ENCODE measurements at regions of chr20 and their contacts with region 1.

Region 1: DNA sequence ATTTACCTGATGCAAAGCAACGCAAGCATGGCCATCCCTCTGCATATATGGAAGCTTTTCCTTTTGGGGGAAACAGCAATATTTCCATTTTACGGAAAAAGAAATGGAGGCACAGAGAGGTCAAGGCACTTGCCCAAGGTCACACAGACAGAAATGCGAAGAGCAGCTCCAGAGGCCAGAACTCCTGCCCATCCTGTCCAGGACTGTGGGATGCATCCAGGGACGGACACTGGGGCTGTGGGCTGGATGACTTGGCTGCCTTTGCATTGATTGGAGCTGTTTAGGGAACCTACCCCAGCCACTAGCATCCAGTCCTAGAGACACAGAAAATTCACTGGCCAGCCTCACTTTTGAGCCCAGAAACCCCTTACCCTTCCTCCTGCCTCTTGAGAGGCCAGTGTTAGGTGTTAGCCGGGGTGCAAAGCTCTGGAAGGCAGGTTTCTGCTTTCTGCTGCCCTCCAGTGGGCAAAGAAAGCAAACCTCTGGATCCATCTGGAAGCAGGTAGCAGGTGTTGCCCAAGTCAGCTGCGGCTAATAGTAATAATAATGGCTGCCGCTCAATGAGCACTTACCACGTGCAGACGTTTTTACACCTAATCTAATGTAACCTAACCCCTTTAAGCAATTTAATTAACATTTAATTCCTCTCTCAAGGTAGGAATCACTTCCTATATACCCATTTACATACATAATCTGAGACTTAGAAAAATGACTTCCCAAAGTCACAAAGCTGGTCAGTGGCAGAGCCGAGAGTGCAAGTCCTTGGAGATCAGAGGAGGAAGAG is 31.7 kb upstream of the CCN5 start:
- DNase-seq: peak in 12 of 14 experiments; percentile 20 to 81 (median 52)
- ATAC-seq: peak; percentile 76
- H3K4me3 ChIP-seq: no peak overlapping the region
- H3K4me3 Mint-ChIP-seq: no peak overlapping the region
- H3K27ac ChIP-seq: no peak overlapping the region
- H3K27ac Mint-ChIP-seq: no peak overlapping the region
- H3K4me1 ChIP-seq: peaks cover 5% of the 10 kb centered on the region
- H3K4me1 Mint-ChIP-seq: peaks cover 15% of the 10 kb centered on the region
- H3K27me3 ChIP-seq: no peaks in the 10 kb centered on the region
- H3K27me3 Mint-ChIP-seq: no peaks in the 10 kb centered on the region
- CTCF ChIP-seq: peak; percentile 58

Region 2: GRCh38 chr20:44264287-44264686 is 419.2 kb before region 1 on chr20:
- CTCF ChIA-PET with region 1: no interaction called
- POLR2A ChIA-PET with region 1: no interaction called
- intact Hi-C with region 1: no loop called
- DNase-seq: no peak
- ATAC-seq: no peak
- H3K4me3 ChIP-seq: no peak overlapping the region
- H3K4me3 Mint-ChIP-seq: no peak overlapping the region
- H3K27ac ChIP-seq: no peak overlapping the region
- H3K27ac Mint-ChIP-seq: no peak overlapping the region
- H3K4me1 ChIP-seq: no peaks in the 10 kb centered on the region
- H3K4me1 Mint-ChIP-seq: no peaks in the 10 kb centered on the region
- H3K27me3 ChIP-seq: no peaks in the 10 kb centered on the region
- H3K27me3 Mint-ChIP-seq: no peaks in the 10 kb centered on the region
- CTCF ChIP-seq: no peak

Region 3: GRCh38 chr20:44603327-44603726 is 80.1 kb before region 1 on chr20:
- CTCF ChIA-PET with region 1: interaction called, 10 read pairs
- POLR2A ChIA-PET with region 1: no interaction called
- intact Hi-C with region 1: no loop called
- DNase-seq: no peak
- ATAC-seq: no peak
- H3K4me3 ChIP-seq: no peak overlapping the region
- H3K4me3 Mint-ChIP-seq: no peak overlapping the region
- H3K27ac ChIP-seq: no peak overlapping the region
- H3K27ac Mint-ChIP-seq: no peak overlapping the region
- H3K4me1 ChIP-seq: peaks cover 14% of the 10 kb centered on the region
- H3K4me1 Mint-ChIP-seq: peaks cover 20% of the 10 kb centered on the region
- H3K27me3 ChIP-seq: no peaks in the 10 kb centered on the region
- H3K27me3 Mint-ChIP-seq: no peaks in the 10 kb centered on the region
- CTCF ChIP-seq: no peak

Region 4: DNA sequence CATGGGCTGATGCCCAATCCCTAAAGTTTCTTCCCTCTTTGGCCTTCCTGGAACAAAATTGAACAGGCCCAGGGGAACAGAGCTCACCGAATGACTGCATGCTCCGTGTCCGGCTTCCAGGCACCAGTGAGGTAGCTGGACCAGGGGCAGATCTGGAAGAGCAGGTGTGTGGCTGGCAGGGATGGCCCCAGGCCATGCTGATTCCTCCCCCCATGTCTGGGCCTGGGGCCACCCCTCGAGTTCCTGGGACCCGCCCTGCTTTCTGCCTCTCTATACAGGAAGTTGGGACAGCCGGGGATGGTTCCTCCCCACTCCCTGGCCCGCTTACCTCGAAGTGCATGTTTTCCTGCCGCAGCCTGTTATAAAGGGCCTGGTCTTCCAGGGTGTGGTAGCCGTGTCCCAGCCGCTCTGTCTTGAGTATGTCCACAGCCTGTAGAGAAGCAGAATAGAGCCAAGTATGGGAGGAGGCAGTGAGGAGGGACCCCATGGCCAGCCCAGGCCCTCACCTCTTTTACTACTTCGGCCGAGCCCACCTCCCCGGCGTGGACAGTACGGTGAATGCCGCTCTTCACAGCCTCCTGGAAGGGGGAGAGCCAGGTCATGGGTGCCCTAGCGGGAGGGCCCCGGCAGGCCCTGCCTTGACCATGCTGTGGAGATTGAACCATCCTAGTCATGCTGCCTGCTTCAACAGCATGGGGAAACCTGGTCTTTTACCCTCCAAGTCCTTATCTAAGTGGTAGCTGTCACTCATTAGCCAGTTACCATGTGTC is 60.8 kb before region 1 on chr20:
- CTCF ChIA-PET with region 1: interaction called, 14 read pairs
- POLR2A ChIA-PET with region 1: interaction called, 4 read pairs
- intact Hi-C with region 1: loop called in 1 of 2 experiments (anchors 5 kb)
- DNase-seq: no peak
- ATAC-seq: no peak
- H3K4me3 ChIP-seq: no peak overlapping the region
- H3K4me3 Mint-ChIP-seq: no peak overlapping the region
- H3K27ac ChIP-seq: no peak overlapping the region
- H3K27ac Mint-ChIP-seq: no peak overlapping the region
- H3K4me1 ChIP-seq: peaks cover 22% of the 10 kb centered on the region
- H3K4me1 Mint-ChIP-seq: peaks cover 33% of the 10 kb centered on the region
- H3K27me3 ChIP-seq: no peaks in the 10 kb centered on the region
- H3K27me3 Mint-ChIP-seq: no peaks in the 10 kb centered on the region
- CTCF ChIP-seq: no peak

Region 5: GRCh38 chr20:44666066-44666465 is 17.4 kb before region 1 on chr20:
- CTCF ChIA-PET with region 1: interaction called, 15 read pairs
- POLR2A ChIA-PET with region 1: no interaction called
- intact Hi-C with region 1: no loop called
- DNase-seq: no peak
- ATAC-seq: no peak
- H3K4me3 ChIP-seq: no peak overlapping the region
- H3K4me3 Mint-ChIP-seq: no peak overlapping the region
- H3K27ac ChIP-seq: no peak overlapping the region
- H3K27ac Mint-ChIP-seq: no peak overlapping the region
- H3K4me1 ChIP-seq: peaks cover 12% of the 10 kb centered on the region
- H3K4me1 Mint-ChIP-seq: peaks cover 10% of the 10 kb centered on the region
- H3K27me3 ChIP-seq: no peaks in the 10 kb centered on the region
- H3K27me3 Mint-ChIP-seq: no peaks in the 10 kb centered on the region
- CTCF ChIP-seq: no peak

Region 6: DNA sequence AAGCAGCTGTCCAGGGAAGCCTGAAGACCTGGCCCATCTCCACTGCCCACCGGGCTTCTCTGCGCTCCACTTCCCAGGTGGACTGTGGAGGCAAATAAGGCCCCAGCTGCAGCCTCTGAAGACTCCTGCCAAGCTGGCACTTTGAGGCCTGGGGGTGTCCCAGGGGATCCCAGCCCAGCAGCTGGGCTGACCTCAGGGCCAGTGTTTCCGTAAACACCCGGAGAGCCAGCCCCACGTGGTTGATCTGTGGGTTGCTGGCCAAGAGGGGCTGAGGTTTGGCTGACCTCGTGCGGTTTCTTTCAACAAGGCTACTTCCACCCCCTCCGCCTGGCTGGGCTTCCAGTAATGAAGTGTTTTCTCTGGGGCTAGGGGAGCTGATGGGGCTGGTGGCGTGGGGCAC is 19.3 kb after region 1 on chr20:
- CTCF ChIA-PET with region 1: no interaction called
- POLR2A ChIA-PET with region 1: no interaction called
- intact Hi-C with region 1: no loop called
- DNase-seq: no peak
- ATAC-seq: no peak
- H3K4me3 ChIP-seq: no peak overlapping the region
- H3K4me3 Mint-ChIP-seq: no peak overlapping the region
- H3K27ac ChIP-seq: no peak overlapping the region
- H3K27ac Mint-ChIP-seq: no peak overlapping the region
- H3K4me1 ChIP-seq: no peaks in the 10 kb centered on the region
- H3K4me1 Mint-ChIP-seq: no peaks in the 10 kb centered on the region
- H3K27me3 ChIP-seq: no peaks in the 10 kb centered on the region
- H3K27me3 Mint-ChIP-seq: no peaks in the 10 kb centered on the region
- CTCF ChIP-seq: no peak

Region 7: GRCh38 chr20:45090481-45090880 is 407.0 kb after region 1 on chr20:
- CTCF ChIA-PET with region 1: no interaction called
- POLR2A ChIA-PET with region 1: no interaction called
- intact Hi-C with region 1: loop called in 1 of 2 experiments (anchors 5 kb)
- DNase-seq: no peak
- ATAC-seq: no peak
- H3K4me3 ChIP-seq: no peak overlapping the region
- H3K4me3 Mint-ChIP-seq: no peak overlapping the region
- H3K27ac ChIP-seq: no peak overlapping the region
- H3K27ac Mint-ChIP-seq: no peak overlapping the region
- H3K4me1 ChIP-seq: no peaks in the 10 kb centered on the region
- H3K4me1 Mint-ChIP-seq: peaks cover 11% of the 10 kb centered on the region
- H3K27me3 ChIP-seq: no peaks in the 10 kb centered on the region
- H3K27me3 Mint-ChIP-seq: no peaks in the 10 kb centered on the region
- CTCF ChIP-seq: no peak

Measured in CD4-positive, alpha-beta T cell (primary cell).